T-cell (primary cell): ENCODE measurements at regions of chr16 and their contacts with region 1.

Region 1: GRCh38 chr16:58198022-58198683 is at the start of gene CSNK2A2:
- DNase-seq: peak; percentile 33 to 85 (median 59)
- ATAC-seq: peak; percentile 96 to 99 (median 98)
- H3K4me3 ChIP-seq: peak within 1 kb of the TSS; percentile 50 to 51
- H3K4me3 Mint-ChIP-seq: peak within 1 kb of the TSS; percentile 80 to 89 (median 84)
- H3K27ac ChIP-seq: no peak within 1 kb of the TSS
- H3K27ac Mint-ChIP-seq: peak within 1 kb of the TSS; percentile 78 to 79
- H3K4me1 ChIP-seq: peaks cover 9 to 18% of the 10 kb centered on the region in 2 experiments
- H3K4me1 Mint-ChIP-seq: peaks cover 44 to 47% (median 47%) of the 10 kb centered on the region in 3 donors
- H3K27me3 ChIP-seq: peaks cover 0 to 16% of the 10 kb centered on the region in 2 experiments
- H3K27me3 Mint-ChIP-seq: peaks cover 6 to 16% of the 10 kb centered on the region in 2 donors
- total RNA-seq, gene CSNK2A2: 51.9 to 62.4 (median 55.0) TPM

Region 2: DNA sequence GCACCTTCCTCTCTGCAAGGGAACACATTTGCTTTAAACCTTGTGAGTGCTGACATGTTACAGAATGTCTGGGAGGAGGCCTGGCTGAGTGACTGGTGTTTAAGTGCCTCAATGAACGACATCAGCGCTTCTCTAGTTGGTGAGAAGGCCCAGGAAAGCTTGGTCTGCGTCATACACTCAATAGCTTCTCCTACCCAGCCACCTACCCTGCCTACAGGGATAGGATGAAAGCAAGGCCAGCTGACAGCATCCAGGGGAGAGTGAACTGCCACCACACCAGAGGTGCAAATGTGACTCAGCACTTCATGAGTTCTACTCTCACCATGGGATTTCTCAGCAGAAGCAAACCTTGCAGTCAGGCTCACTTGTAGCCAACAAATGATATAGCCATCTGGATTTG is 37.3 kb before region 1 on chr16:
- CTCF ChIA-PET with region 1: no interaction called
- POLR2A ChIA-PET with region 1: interaction called in 1 of 2 experiments, 10 read pairs
- DNase-seq: no peak
- ATAC-seq: no peak
- H3K4me3 ChIP-seq: no peak overlapping the region
- H3K4me3 Mint-ChIP-seq: no peak overlapping the region
- H3K27ac ChIP-seq: no peak overlapping the region
- H3K27ac Mint-ChIP-seq: peak overlapping the region; percentile 15 to 55
- H3K4me1 ChIP-seq: no peaks in the 10 kb centered on the region
- H3K4me1 Mint-ChIP-seq: peaks cover 0 to 1% (median 0%) of the 10 kb centered on the region in 3 donors
- H3K27me3 ChIP-seq: no peaks in the 10 kb centered on the region
- H3K27me3 Mint-ChIP-seq: no peaks in the 10 kb centered on the region